Thyroid gland (tissue), 4 donors: ENCODE measurements at regions of chr19 and their contacts with region 1.

Region 1: DNA sequence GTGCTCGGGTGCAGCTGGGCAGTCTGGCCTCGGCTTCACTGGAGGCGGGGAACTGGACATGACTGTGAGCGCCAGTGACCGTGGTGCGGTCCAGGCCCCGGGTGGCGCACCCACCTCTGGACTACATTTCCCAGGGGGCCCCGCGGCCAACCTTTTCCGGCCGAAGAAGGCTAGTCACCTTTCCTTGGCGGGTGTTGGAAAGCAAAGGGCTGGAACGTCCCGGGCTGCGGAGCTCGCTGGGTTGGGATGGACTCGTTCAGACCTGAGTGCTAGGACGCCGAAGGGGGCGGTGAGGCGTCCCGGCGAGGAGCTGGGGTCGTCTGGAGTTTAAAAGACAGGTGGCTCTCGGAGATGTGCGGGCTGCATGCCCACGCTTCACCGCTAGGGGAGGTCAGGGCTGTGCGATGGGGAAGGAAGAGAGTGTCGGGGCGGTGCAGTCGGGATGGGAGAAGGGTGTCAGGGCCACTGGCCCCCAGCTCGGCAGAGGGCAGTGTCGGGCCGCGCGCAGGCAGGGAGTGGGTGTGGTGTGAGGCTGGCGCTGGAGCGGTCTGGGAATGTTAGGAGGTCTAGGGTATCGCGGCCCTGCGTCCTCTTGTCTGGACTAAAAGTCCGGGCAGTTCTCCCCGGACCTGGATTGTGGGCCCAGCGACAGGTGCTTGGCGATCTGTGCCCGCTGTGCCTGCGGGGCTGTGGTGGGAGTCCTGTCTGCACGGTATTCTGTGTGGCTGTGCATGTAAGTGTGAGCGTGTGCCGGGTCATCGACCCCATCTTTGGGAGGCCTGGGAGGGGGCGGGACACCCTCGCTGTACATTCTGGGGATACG is 57.1 kb downstream of the ZNF568 start:
- DNase-seq: peak; percentile 88 to 91
- H3K4me3 ChIP-seq: peak overlapping the region; percentile 18 to 41 (median 36)
- H3K27ac ChIP-seq: peak overlapping the region; percentile 26 to 88 (median 70)
- H3K4me1 ChIP-seq: peaks cover 6 to 13% of the 10 kb centered on the region in 2 donors
- H3K27me3 ChIP-seq: no peaks in the 10 kb centered on the region
- CTCF ChIP-seq: peak; percentile 83 to 100 (median 98)
- POLR2A ChIP-seq: peak in 1 of 2 donors; percentile 53

Region 2: GRCh38 chr19:36931684-36932083 is 41.5 kb before region 1 on chr19:
- intact Hi-C with region 1: no loop called
- DNase-seq: no peak
- H3K4me3 ChIP-seq: no peak overlapping the region
- H3K27ac ChIP-seq: no peak overlapping the region
- H3K4me1 ChIP-seq: no peaks in the 10 kb centered on the region
- H3K27me3 ChIP-seq: no peaks in the 10 kb centered on the region
- CTCF ChIP-seq: no peak
- POLR2A ChIP-seq: no peak

Region 3: GRCh38 chr19:37082307-37082706 is 109.1 kb after region 1 on chr19:
- intact Hi-C with region 1: loop called (anchors 10 kb)
- DNase-seq: no peak
- H3K4me3 ChIP-seq: no peak overlapping the region
- H3K27ac ChIP-seq: no peak overlapping the region
- H3K4me1 ChIP-seq: peaks cover 7 to 10% of the 10 kb centered on the region in 2 donors
- H3K27me3 ChIP-seq: no peaks in the 10 kb centered on the region
- CTCF ChIP-seq: no peak
- POLR2A ChIP-seq: no peak

Region 4: DNA sequence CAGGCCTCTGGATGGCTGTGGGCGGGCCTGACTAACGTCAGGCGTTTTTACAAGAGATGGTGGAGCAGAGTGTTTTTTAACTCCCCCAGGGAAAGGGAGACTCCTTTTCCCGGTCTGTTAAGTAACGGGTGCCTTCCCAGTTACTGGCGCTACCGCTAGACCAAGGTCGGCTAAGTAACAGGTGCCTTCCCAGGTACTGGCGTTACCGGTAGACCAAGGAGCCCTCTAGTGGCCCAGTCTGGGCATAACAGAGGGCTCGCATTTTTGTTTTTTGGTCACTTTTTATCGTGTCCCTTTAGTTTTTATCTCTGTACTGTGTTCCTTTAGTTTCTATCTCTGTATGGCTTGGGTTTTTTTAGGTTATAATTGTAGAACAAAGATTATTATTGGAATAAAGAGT is 254.8 kb after region 1 on chr19:
- intact Hi-C with region 1: loop called (anchors 5 kb)
- DNase-seq: peak; percentile 68 to 72
- H3K4me3 ChIP-seq: no peak overlapping the region
- H3K27ac ChIP-seq: no peak overlapping the region
- H3K4me1 ChIP-seq: no peaks in the 10 kb centered on the region
- H3K27me3 ChIP-seq: no peaks in the 10 kb centered on the region
- CTCF ChIP-seq: peak; percentile 64 to 86 (median 80)
- POLR2A ChIP-seq: no peak

Region 5: GRCh38 chr19:37403403-37403802 is 430.2 kb after region 1 on chr19:
- intact Hi-C with region 1: no loop called
- DNase-seq: no peak
- H3K4me3 ChIP-seq: no peak overlapping the region
- H3K27ac ChIP-seq: no peak overlapping the region
- H3K4me1 ChIP-seq: no peaks in the 10 kb centered on the region
- H3K27me3 ChIP-seq: no peaks in the 10 kb centered on the region
- CTCF ChIP-seq: no peak
- POLR2A ChIP-seq: no peak

Region 6: DNA sequence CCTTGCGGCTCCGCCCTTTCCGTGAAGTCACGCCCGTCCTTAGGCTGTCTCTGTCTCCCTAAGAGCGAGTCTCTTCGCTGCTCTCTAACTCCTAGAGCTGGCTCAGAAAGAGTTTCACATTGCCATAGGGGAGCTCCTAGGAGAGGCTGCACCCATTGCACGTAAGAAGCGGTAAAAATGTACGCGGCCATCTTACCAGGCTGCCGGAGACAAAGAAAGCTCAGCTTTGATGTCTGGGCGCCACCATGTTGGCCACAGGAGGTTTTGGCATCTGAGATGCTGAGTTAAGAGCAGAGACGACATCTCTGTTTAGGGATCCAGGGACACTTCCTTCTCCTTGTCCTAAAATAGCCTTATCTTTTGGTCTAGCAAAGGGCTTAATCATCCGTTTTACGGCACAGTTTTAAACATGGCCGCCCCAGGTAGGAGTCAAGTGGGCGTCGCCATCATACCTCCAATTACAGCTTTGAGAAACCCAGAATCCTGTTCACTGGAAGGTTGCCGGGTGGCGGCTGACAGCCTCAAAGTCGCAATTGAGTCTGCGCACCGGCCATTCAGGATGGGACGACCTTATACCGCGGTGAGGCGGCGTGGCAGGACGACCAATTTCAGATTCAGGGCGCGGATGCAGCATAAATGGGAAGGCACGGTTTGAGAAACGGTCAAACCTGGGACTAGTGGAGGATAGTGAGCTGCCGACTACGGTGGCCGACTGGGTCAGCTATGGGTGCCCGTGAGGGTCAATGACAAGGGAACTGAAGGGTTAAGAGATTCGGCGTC is 533.3 kb after region 1 on chr19 and contains the start of gene ZNF793:
- intact Hi-C with region 1: no loop called
- DNase-seq: peak; percentile 89 to 90
- H3K4me3 ChIP-seq: peak within 1 kb of the TSS; percentile 49 to 81 (median 49)
- H3K27ac ChIP-seq: peak within 1 kb of the TSS; percentile 90 to 97 (median 95)
- H3K4me1 ChIP-seq: peaks cover 6 to 7% of the 10 kb centered on the region in 2 donors
- H3K27me3 ChIP-seq: no peaks in the 10 kb centered on the region
- CTCF ChIP-seq: no peak
- POLR2A ChIP-seq: peak in 1 of 2 donors; percentile 63
- total RNA-seq, gene ZNF793: 8.7 to 11.3 (median 10.2) TPM